Left ventricle myocardium inferior (tissue), 1 donor: ENCODE measurements at regions of chr22 and their contacts with region 1.

Region 1: GRCh38 chr22:31970490-31971444 is 26.4 kb downstream of the YWHAH start:
- DNase-seq: peak; percentile 77
- H3K4me3 ChIP-seq: peak overlapping the region; percentile 66
- H3K27ac ChIP-seq: no peak overlapping the region
- H3K4me1 ChIP-seq: peaks cover 20% of the 10 kb centered on the region
- H3K27me3 ChIP-seq: no peaks in the 10 kb centered on the region
- CTCF ChIP-seq: peak; percentile 92

Region 2: GRCh38 chr22:31952459-31952858 is 18.3 kb before region 1 on chr22:
- intact Hi-C with region 1: loop called (anchors 2 kb)
- DNase-seq: no peak
- H3K4me3 ChIP-seq: no peak overlapping the region
- H3K27ac ChIP-seq: peak overlapping the region; percentile 70
- H3K4me1 ChIP-seq: peaks cover 79% of the 10 kb centered on the region
- H3K27me3 ChIP-seq: no peaks in the 10 kb centered on the region
- CTCF ChIP-seq: no peak

Region 3: DNA sequence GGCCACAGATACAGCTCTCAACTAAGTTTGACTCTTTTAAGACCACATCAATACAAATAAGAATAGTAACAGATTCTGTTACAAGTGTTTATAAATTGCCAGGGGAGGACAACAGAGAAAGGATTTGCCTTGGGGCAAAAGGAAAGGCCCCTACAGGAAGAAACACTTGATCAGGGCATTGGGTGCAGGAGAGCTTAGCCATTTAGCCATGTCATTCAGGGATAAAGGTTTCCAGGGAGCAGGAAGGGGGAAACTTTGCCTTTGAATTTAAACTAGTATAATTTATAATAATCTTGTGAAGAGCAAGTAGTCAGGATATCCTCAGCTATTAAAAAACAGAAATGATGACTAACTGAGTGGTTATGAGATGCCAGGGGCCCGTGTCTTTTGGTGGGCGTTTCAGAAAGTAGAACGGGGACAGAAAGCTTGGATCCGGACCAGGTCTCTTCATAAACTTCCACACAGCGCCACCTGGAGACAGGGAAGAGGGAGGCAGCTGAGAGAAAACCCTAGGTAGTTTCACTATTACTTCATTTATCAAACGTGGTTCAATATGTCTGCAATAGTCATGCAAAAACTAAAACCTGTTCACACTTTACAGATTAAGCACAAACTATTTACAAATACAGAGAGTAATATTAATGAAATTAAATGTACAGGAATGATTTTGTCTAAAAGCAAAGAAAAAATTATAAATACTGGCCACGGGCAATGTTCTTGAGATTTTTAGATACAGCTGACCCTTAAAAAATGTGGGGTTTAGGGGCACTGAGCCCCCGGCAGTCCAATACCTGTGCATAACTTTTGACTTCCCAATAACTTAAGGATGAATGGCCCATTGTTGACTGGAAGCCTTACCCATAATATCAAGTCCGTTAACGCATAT is 295.4 kb after region 1 on chr22:
- intact Hi-C with region 1: loop called (anchors 10 kb)
- DNase-seq: peak; percentile 53
- H3K4me3 ChIP-seq: peak overlapping the region; percentile 42
- H3K27ac ChIP-seq: no peak overlapping the region
- H3K4me1 ChIP-seq: peaks cover 8% of the 10 kb centered on the region
- H3K27me3 ChIP-seq: peaks cover 9% of the 10 kb centered on the region
- CTCF ChIP-seq: peak; percentile 91